K562 (cell line): ENCODE measurements at regions of chr11 and their contacts with region 1.

Region 1: GRCh38 chr11:124415356-124415923 is 9.2 kb downstream of the OR8B4 start:
- DNase-seq: peak; percentile 29 to 49 (median 41)
- ATAC-seq: no peak
- H3K4me3 ChIP-seq: no peak overlapping the region
- H3K27ac ChIP-seq: no peak overlapping the region
- H3K4me1 ChIP-seq: no peaks in the 10 kb centered on the region
- H3K27me3 ChIP-seq: no peaks in the 10 kb centered on the region
- CTCF ChIP-seq: peak; percentile 48 to 80 (median 53); a peak in 5 of 6 replicates
- EP300 ChIP-seq: no peak
- POLR2A ChIP-seq: no peak
- RAD21 ChIP-seq: peak; percentile 60 to 83

Region 2: GRCh38 chr11:124285610-124286344 is 129.7 kb before region 1 on chr11:
- CTCF ChIA-PET with region 1: no interaction called
- POLR2A ChIA-PET with region 1: no interaction called
- in situ Hi-C with region 1: no loop called
- intact Hi-C with region 1: no loop called
- DNase-seq: no peak
- ATAC-seq: no peak
- H3K4me3 ChIP-seq: no peak overlapping the region
- H3K27ac ChIP-seq: no peak overlapping the region
- H3K4me1 ChIP-seq: no peaks in the 10 kb centered on the region
- H3K27me3 ChIP-seq: no peaks in the 10 kb centered on the region
- CTCF ChIP-seq: no peak
- EP300 ChIP-seq: no peak
- POLR2A ChIP-seq: no peak
- RAD21 ChIP-seq: no peak

Region 3: GRCh38 chr11:124536520-124536919 is 121.1 kb after region 1 on chr11:
- CTCF ChIA-PET with region 1: interaction called, 3 read pairs
- POLR2A ChIA-PET with region 1: no interaction called
- in situ Hi-C with region 1: no loop called
- intact Hi-C with region 1: loop called (anchors 1 kb)
- DNase-seq: peak in 2 of 4 experiments; percentile 8 to 40
- ATAC-seq: peak; percentile 84
- H3K4me3 ChIP-seq: no peak overlapping the region
- H3K27ac ChIP-seq: peak overlapping the region; percentile 45; the same call in 1 of the 3 replicates
- H3K4me1 ChIP-seq: peaks cover 0 to 22% of the 10 kb centered on the region in 2 experiments; a peak in 4 of 5 replicates
- H3K27me3 ChIP-seq: no peaks in the 10 kb centered on the region
- CTCF ChIP-seq: peak in 2 of 3 experiments; percentile 38 to 57; a peak in 2 of 6 replicates
- EP300 ChIP-seq: no peak
- POLR2A ChIP-seq: no peak
- RAD21 ChIP-seq: peak; percentile 61 to 62

Region 4: GRCh38 chr11:124586238-124586860 is 170.9 kb after region 1 on chr11:
- CTCF ChIA-PET with region 1: interaction called, 9 read pairs
- POLR2A ChIA-PET with region 1: no interaction called
- in situ Hi-C with region 1: loop called (anchors 5 kb)
- intact Hi-C with region 1: loop called (anchors 1 kb)
- DNase-seq: peak; percentile 25 to 75 (median 41)
- ATAC-seq: peak; percentile 84
- H3K4me3 ChIP-seq: no peak overlapping the region
- H3K27ac ChIP-seq: no peak overlapping the region
- H3K4me1 ChIP-seq: peaks cover 0 to 5% of the 10 kb centered on the region in 2 experiments; a peak in 2 of 5 replicates
- H3K27me3 ChIP-seq: no peaks in the 10 kb centered on the region
- CTCF ChIP-seq: peak; percentile 66 to 71 (median 67)
- EP300 ChIP-seq: no peak
- POLR2A ChIP-seq: no peak
- RAD21 ChIP-seq: peak; percentile 68 to 73

Region 5: GRCh38 chr11:124724979-124725718 is 309.7 kb after region 1 on chr11:
- CTCF ChIA-PET with region 1: no interaction called
- POLR2A ChIA-PET with region 1: no interaction called
- in situ Hi-C with region 1: no loop called
- intact Hi-C with region 1: no loop called
- DNase-seq: no peak
- ATAC-seq: no peak
- H3K4me3 ChIP-seq: no peak overlapping the region
- H3K27ac ChIP-seq: no peak overlapping the region
- H3K4me1 ChIP-seq: no peaks in the 10 kb centered on the region; a peak in 1 of 5 replicates
- H3K27me3 ChIP-seq: peaks cover 30 to 65% of the 10 kb centered on the region in 2 experiments
- CTCF ChIP-seq: no peak
- EP300 ChIP-seq: no peak
- POLR2A ChIP-seq: no peak
- RAD21 ChIP-seq: no peak

Region 6: GRCh38 chr11:124763156-124763947 is 347.9 kb after region 1 on chr11:
- CTCF ChIA-PET with region 1: no interaction called
- POLR2A ChIA-PET with region 1: no interaction called
- in situ Hi-C with region 1: loop called (anchors 10 kb)
- intact Hi-C with region 1: loop called (anchors 10 kb)
- DNase-seq: peak; percentile 62 to 87 (median 66)
- ATAC-seq: peak; percentile 75
- H3K4me3 ChIP-seq: peak overlapping the region; percentile 46
- H3K27ac ChIP-seq: no peak overlapping the region
- H3K4me1 ChIP-seq: peaks cover 0 to 34% of the 10 kb centered on the region in 2 experiments; a peak in 4 of 5 replicates
- H3K27me3 ChIP-seq: peaks cover 0 to 22% of the 10 kb centered on the region in 2 experiments; a peak in 2 of 5 replicates
- CTCF ChIP-seq: peak; percentile 82 to 84 (median 84)
- EP300 ChIP-seq: no peak
- POLR2A ChIP-seq: no peak
- RAD21 ChIP-seq: peak; percentile 55 to 70

Region 7: GRCh38 chr11:124812876-124813275 is 397.4 kb after region 1 on chr11:
- CTCF ChIA-PET with region 1: no interaction called
- POLR2A ChIA-PET with region 1: no interaction called
- in situ Hi-C with region 1: no loop called
- intact Hi-C with region 1: no loop called
- DNase-seq: no peak
- ATAC-seq: no peak
- H3K4me3 ChIP-seq: no peak overlapping the region
- H3K27ac ChIP-seq: no peak overlapping the region
- H3K4me1 ChIP-seq: peaks cover 0 to 2% of the 10 kb centered on the region in 2 experiments; a peak in 3 of 5 replicates
- H3K27me3 ChIP-seq: peaks cover 10 to 15% of the 10 kb centered on the region in 2 experiments
- CTCF ChIP-seq: no peak
- EP300 ChIP-seq: no peak
- POLR2A ChIP-seq: no peak
- RAD21 ChIP-seq: no peak